Aorta (tissue), 5 donors: ENCODE measurements at regions of chr1 and their contacts with region 1.

Region 1: GRCh38 chr1:183218971-183219615 is 33.0 kb downstream of the LAMC2 start:
- DNase-seq: peak in 1 of 2 donors; percentile 54
- ATAC-seq: peak; percentile 80
- H3K4me3 ChIP-seq: no peak overlapping the region
- H3K27ac ChIP-seq: peak overlapping the region in 1 of 2 donors; percentile 11
- H3K4me1 ChIP-seq: peaks cover 0 to 2% of the 10 kb centered on the region in 2 donors
- H3K27me3 ChIP-seq: no peaks in the 10 kb centered on the region

Region 2: DNA sequence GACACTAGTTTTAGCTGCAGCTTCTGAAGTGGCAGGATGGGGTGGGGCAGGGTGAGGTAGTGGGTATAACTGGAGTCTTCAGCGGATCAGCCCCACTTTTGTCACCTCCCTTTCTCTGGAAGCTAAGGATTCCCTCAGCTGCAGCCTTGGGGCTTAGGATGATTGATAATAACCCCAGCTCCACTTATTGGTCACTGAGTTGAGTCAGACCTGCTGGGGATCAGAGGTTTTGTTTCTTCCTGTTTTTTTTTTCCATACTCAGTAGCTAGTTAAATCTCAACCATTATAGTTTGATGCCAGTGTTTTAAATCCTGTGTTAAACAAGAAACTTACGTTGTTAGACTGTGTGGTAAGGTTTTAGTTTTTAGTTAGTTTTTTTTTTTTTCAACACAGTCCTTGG is 138.7 kb before region 1 on chr1:
- intact Hi-C with region 1: no loop called
- DNase-seq: no peak
- ATAC-seq: no peak
- H3K4me3 ChIP-seq: no peak overlapping the region
- H3K27ac ChIP-seq: no peak overlapping the region
- H3K4me1 ChIP-seq: peaks cover 7 to 9% of the 10 kb centered on the region in 2 donors
- H3K27me3 ChIP-seq: no peaks in the 10 kb centered on the region

Region 3: GRCh38 chr1:183148599-183148998 is 70.5 kb before region 1 on chr1:
- intact Hi-C with region 1: no loop called
- DNase-seq: no peak
- ATAC-seq: peak; percentile 74
- H3K4me3 ChIP-seq: no peak overlapping the region
- H3K27ac ChIP-seq: no peak overlapping the region
- H3K4me1 ChIP-seq: peaks cover 0 to 4% of the 10 kb centered on the region in 2 donors
- H3K27me3 ChIP-seq: no peaks in the 10 kb centered on the region

Region 4: DNA sequence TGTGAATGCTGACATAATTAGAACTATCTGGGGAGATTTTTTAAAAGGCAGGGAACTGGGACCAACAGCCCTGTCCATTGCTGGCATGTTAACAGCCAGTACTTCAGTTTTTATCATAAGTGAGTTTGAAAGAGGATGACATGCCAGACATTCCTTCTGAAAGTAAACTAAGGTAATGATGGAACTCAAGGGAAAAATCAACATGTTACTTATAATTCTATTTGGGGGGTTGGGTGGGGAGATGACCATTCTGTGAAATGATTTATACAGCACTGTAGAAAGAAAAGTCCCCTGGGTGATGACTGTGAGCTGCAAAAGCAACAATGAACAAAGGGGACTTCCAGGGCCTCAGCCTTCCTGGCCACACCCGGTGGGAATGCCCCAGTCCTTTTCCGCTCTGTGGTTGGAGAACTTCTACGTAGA is 38.4 kb before region 1 on chr1:
- intact Hi-C with region 1: loop called in 1 of 2 experiments (anchors 5 kb)
- DNase-seq: peak; percentile 76 to 83
- ATAC-seq: peak; percentile 85
- H3K4me3 ChIP-seq: no peak overlapping the region
- H3K27ac ChIP-seq: peak overlapping the region; percentile 33 to 74
- H3K4me1 ChIP-seq: peaks cover 0 to 1% of the 10 kb centered on the region in 2 donors
- H3K27me3 ChIP-seq: no peaks in the 10 kb centered on the region